ENCODE measurements at regions of chr20 and their contacts with region 1.

Region 1: GRCh38 chr20:3820048-3820900 is at the start of gene AP5S1:
- DNase-seq: peak; percentile 97
- ATAC-seq: peak; percentile 82
- H3K4me3 Mint-ChIP-seq: peak within 1 kb of the TSS; percentile 85
- H3K27ac Mint-ChIP-seq: peak within 1 kb of the TSS; percentile 90
- H3K4me1 Mint-ChIP-seq: peaks cover 47% of the 10 kb centered on the region
- H3K27me3 Mint-ChIP-seq: no peaks in the 10 kb centered on the region
- total RNA-seq, gene AP5S1: 13.8 to 15.5 TPM

Region 2: GRCh38 chr20:3795511-3796468 is 24.5 kb before region 1 on chr20 and contains the start of gene CDC25B:
- CTCF ChIA-PET with region 1: interaction called, 51 read pairs
- DNase-seq: peak; percentile 97
- ATAC-seq: peak; percentile 79
- H3K4me3 Mint-ChIP-seq: peak within 1 kb of the TSS; percentile 94
- H3K27ac Mint-ChIP-seq: peak within 1 kb of the TSS; percentile 95
- H3K4me1 Mint-ChIP-seq: peaks cover 35% of the 10 kb centered on the region
- H3K27me3 Mint-ChIP-seq: no peaks in the 10 kb centered on the region
- total RNA-seq, gene CDC25B: 194 to 312 TPM

Region 3: DNA sequence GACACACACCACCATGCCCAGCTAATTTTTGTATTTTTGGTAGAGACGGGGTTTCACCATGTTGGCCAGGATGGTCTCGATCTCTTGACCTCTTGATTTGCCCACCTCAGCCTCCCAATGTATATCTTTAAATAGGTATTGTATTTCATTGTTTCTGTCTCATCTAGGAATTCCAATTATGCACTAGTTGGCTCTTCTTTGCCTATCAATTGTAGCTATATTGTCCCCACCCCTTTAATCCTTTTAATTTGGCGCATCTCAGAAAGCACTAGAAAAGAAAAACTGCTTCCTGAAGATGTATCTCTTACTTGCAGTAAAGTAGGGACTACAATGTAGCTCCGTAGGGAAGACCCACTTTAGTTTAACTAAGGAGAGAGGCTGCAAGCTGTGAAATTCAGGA is 15.9 kb after region 1 on chr20:
- CTCF ChIA-PET with region 1: interaction called, 10 read pairs
- DNase-seq: no peak
- ATAC-seq: no peak
- H3K4me3 Mint-ChIP-seq: no peak overlapping the region
- H3K27ac Mint-ChIP-seq: no peak overlapping the region
- H3K4me1 Mint-ChIP-seq: peaks cover 15% of the 10 kb centered on the region
- H3K27me3 Mint-ChIP-seq: no peaks in the 10 kb centered on the region

Region 4: GRCh38 chr20:3846740-3847428 is 26.6 kb after region 1 on chr20 and contains the start of gene MAVS:
- CTCF ChIA-PET with region 1: interaction called, 13 read pairs
- DNase-seq: peak; percentile 88
- ATAC-seq: peak; percentile 99
- H3K4me3 Mint-ChIP-seq: peak within 1 kb of the TSS; percentile 82
- H3K27ac Mint-ChIP-seq: peak within 1 kb of the TSS; percentile 76
- H3K4me1 Mint-ChIP-seq: peaks cover 34% of the 10 kb centered on the region
- H3K27me3 Mint-ChIP-seq: no peaks in the 10 kb centered on the region
- total RNA-seq, gene MAVS: 29.7 to 37.4 TPM